Thyroid gland (tissue), 4 donors: ENCODE measurements at regions of chr5 and their contacts with region 1.

Region 1: GRCh38 chr5:179089502-179089901 is 29.3 kb downstream of the ZNF354C start:
- DNase-seq: no peak
- H3K4me3 ChIP-seq: no peak overlapping the region
- H3K27ac ChIP-seq: no peak overlapping the region
- H3K4me1 ChIP-seq: no peaks in the 10 kb centered on the region
- H3K27me3 ChIP-seq: no peaks in the 10 kb centered on the region
- CTCF ChIP-seq: no peak
- POLR2A ChIP-seq: no peak

Region 2: GRCh38 chr5:178699681-178700253 is 389.7 kb before region 1 on chr5:
- intact Hi-C with region 1: loop called (anchors 10 kb)
- DNase-seq: no peak
- H3K4me3 ChIP-seq: no peak overlapping the region
- H3K27ac ChIP-seq: no peak overlapping the region
- H3K4me1 ChIP-seq: no peaks in the 10 kb centered on the region
- H3K27me3 ChIP-seq: no peaks in the 10 kb centered on the region
- CTCF ChIP-seq: no peak
- POLR2A ChIP-seq: no peak

Region 3: GRCh38 chr5:180259260-180259681 is 1169.8 kb after region 1 on chr5:
- intact Hi-C with region 1: loop called (anchors 10 kb)
- DNase-seq: no peak
- H3K4me3 ChIP-seq: no peak overlapping the region
- H3K27ac ChIP-seq: no peak overlapping the region
- H3K4me1 ChIP-seq: no peaks in the 10 kb centered on the region
- H3K27me3 ChIP-seq: no peaks in the 10 kb centered on the region
- CTCF ChIP-seq: no peak
- POLR2A ChIP-seq: no peak